T-cell (primary cell): ENCODE measurements at regions of chr9 and their contacts with region 1.

Region 1: DNA sequence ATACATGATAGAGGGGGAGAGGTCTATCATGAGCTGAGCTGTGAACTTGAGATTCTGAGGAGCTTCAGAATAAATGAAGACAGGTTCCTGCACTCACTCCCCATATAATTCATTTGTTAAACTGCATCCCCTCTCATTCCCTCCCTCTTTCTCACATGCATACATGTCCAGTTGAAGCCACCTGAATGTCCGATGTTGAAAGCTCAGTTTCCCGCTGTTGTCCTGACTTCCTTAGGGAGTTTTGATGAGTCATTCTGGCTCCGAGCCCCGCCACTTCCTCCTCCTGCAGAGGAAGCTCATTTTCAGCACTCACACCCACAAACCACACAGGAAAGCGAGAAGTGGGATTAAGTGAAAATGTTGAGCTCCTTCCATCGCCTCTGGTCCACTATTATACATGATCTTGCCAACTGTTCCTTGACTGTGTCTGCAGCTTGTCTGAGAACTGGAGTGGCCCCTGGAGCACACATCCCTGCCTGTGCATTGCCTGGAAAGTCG is 121.2 kb downstream of the CEMIP2 start:
- DNase-seq: peak in 6 of 35 experiments; percentile 0 to 38 (median 6)
- ATAC-seq: peak in 1 of 4 experiments; percentile 12
- H3K4me3 ChIP-seq: peak overlapping the region in 1 of 2 donors; percentile 11
- H3K4me3 Mint-ChIP-seq: peak overlapping the region; percentile 45 to 69 (median 55)
- H3K27ac ChIP-seq: no peak overlapping the region
- H3K27ac Mint-ChIP-seq: peak overlapping the region in 1 of 2 donors; percentile 45
- H3K4me1 ChIP-seq: peaks cover 7 to 16% of the 10 kb centered on the region in 2 experiments
- H3K4me1 Mint-ChIP-seq: peaks cover 23 to 32% (median 26%) of the 10 kb centered on the region in 3 donors
- H3K27me3 ChIP-seq: no peaks in the 10 kb centered on the region
- H3K27me3 Mint-ChIP-seq: peaks cover 2 to 3% of the 10 kb centered on the region in 2 donors

Region 2: GRCh38 chr9:71636143-71636839 is 10.9 kb before region 1 on chr9:
- CTCF ChIA-PET with region 1: no interaction called
- POLR2A ChIA-PET with region 1: no interaction called
- DNase-seq: no peak
- ATAC-seq: no peak
- H3K4me3 ChIP-seq: no peak overlapping the region
- H3K4me3 Mint-ChIP-seq: no peak overlapping the region
- H3K27ac ChIP-seq: no peak overlapping the region
- H3K27ac Mint-ChIP-seq: no peak overlapping the region
- H3K4me1 ChIP-seq: peaks cover 0 to 11% of the 10 kb centered on the region in 2 experiments
- H3K4me1 Mint-ChIP-seq: peaks cover 14 to 29% (median 25%) of the 10 kb centered on the region in 3 donors
- H3K27me3 ChIP-seq: no peaks in the 10 kb centered on the region
- H3K27me3 Mint-ChIP-seq: no peaks in the 10 kb centered on the region

Region 3: DNA sequence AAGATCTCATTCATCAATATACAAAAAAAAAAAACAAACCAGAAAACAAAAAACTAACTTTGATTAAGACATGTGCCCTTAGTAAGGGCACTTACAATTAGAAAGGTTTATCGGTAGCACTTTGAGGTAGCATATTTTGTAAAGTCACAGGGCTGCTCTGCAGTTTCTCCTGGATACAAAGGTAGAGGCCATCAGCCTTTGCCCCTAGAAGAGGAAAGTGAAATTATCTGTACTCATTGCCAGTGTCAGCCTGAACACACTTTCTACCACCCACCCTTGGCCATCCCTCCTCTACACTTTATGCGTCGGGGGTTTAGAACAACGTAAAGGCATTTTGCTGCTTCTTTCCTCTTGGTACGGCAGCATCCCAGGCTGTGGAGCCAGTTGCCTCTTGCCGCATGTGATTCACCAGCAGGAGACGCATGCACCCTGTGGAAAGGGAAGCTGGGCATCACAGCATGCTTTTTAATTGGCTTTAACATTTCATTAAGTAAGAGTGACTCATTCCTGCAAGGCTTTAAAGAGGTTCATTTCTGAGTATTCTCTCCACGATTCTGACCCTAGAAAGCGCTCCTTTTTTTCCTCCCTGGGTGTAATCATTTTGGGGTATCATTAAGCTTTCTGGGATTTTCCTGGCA is 36.6 kb after region 1 on chr9:
- CTCF ChIA-PET with region 1: interaction called in 1 of 2 experiments, 8 read pairs
- POLR2A ChIA-PET with region 1: interaction called in 1 of 2 experiments, 13 read pairs
- DNase-seq: peak in 2 of 35 experiments; percentile 2 to 14
- ATAC-seq: no peak
- H3K4me3 ChIP-seq: no peak overlapping the region
- H3K4me3 Mint-ChIP-seq: peak overlapping the region in 1 of 3 donors; percentile 17
- H3K27ac ChIP-seq: no peak overlapping the region
- H3K27ac Mint-ChIP-seq: peak overlapping the region; percentile 23 to 71
- H3K4me1 ChIP-seq: peaks cover 31 to 41% of the 10 kb centered on the region in 2 experiments
- H3K4me1 Mint-ChIP-seq: peaks cover 53 to 68% (median 66%) of the 10 kb centered on the region in 3 donors
- H3K27me3 ChIP-seq: no peaks in the 10 kb centered on the region
- H3K27me3 Mint-ChIP-seq: no peaks in the 10 kb centered on the region

Region 4: DNA sequence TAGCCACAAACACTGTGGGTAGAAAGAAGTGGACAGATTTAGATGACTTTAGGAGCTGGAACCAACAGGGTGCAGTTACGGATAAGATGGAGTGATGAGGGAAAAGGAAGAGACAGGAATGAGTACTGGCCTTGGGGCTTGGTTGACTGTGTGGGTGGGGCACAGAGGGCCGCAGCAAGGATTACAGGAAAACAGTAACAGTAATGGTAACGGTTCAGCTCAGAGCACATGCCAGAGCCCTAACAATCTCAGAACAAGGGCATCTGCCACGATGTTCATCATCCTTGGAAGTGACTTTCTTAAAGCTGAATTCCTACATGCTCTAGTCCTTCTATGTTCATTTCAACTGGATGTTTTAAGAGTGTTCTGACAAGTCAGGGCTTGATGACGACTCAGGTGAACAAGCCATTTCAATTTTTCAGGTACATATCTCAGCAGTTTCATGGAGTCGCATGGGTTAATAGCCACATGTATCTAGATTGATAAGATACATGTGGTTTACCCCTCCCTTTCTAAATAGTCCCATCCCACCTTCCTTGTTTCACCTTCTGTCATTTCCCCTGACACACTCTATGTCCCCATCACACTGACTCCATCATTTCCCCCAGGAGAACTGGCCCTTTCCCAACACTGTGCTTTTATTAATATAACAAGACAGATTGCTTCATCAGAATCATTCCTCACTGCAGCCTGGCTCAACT is 56.2 kb after region 1 on chr9:
- CTCF ChIA-PET with region 1: no interaction called
- POLR2A ChIA-PET with region 1: no interaction called
- DNase-seq: no peak
- ATAC-seq: no peak
- H3K4me3 ChIP-seq: no peak overlapping the region
- H3K4me3 Mint-ChIP-seq: no peak overlapping the region
- H3K27ac ChIP-seq: no peak overlapping the region
- H3K27ac Mint-ChIP-seq: peak overlapping the region; percentile 36 to 56
- H3K4me1 ChIP-seq: no peaks in the 10 kb centered on the region
- H3K4me1 Mint-ChIP-seq: peaks cover 0 to 5% (median 0%) of the 10 kb centered on the region in 3 donors
- H3K27me3 ChIP-seq: no peaks in the 10 kb centered on the region
- H3K27me3 Mint-ChIP-seq: no peaks in the 10 kb centered on the region

Region 5: GRCh38 chr9:71778085-71778484 is 130.9 kb after region 1 on chr9:
- CTCF ChIA-PET with region 1: no interaction called
- POLR2A ChIA-PET with region 1: interaction called in 1 of 2 experiments, 10 read pairs
- DNase-seq: no peak
- ATAC-seq: no peak
- H3K4me3 ChIP-seq: no peak overlapping the region
- H3K4me3 Mint-ChIP-seq: no peak overlapping the region
- H3K27ac ChIP-seq: no peak overlapping the region
- H3K27ac Mint-ChIP-seq: no peak overlapping the region
- H3K4me1 ChIP-seq: peaks cover 21 to 30% of the 10 kb centered on the region in 2 experiments
- H3K4me1 Mint-ChIP-seq: peaks cover 37 to 42% (median 38%) of the 10 kb centered on the region in 3 donors
- H3K27me3 ChIP-seq: no peaks in the 10 kb centered on the region
- H3K27me3 Mint-ChIP-seq: no peaks in the 10 kb centered on the region